ENCODE measurements at regions of chr6 and their contacts with region 1.

Region 1: DNA sequence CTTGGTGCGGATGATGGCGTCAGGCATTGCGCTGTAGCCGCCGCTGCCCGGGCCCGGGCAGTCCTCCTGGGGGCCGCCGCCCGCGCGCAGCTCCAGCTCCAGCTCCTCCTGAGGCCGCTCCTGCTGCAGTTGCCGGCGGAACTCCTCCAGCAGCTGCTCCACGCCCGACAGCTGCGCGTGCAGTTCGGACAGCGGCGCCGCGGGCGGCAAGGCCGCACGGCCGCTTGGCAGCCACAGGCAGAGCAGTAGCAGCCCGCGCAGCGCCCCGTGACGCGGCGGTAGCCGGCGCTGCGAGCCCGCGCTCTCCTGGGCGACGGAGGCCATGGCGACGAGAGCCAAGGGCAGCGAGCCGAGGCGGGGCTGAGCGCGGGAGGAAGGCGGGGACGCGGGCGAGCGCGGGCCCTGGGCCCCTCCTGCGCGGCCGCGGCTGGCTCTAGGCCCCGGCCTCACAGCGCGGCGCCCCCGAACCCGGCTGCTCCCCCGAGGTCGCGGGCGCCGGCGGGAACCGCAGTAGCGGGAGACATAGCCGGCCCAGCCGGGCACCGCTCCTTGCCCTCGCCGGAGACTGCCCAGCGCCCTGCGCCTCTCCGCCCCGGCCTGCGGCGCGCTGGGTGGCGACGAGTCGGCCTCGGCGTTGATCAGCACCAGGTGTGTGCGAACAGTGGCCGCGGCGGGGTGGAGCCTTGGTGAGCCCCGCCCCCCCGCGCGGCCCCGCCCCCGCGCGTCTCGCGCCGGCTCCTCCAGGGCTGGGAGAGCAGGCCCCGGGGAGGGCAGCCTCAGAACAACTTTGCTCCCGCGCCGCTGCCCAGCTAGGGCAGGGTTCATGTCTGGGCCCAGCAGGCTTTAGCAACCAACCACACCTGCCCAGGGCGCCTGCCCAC is at the start of gene LRP11:
- DNase-seq: peak; percentile 78
- H3K4me3 Mint-ChIP-seq: peak within 1 kb of the TSS; percentile 83
- H3K27ac Mint-ChIP-seq: no peak within 1 kb of the TSS
- H3K4me1 Mint-ChIP-seq: peaks cover 5% of the 10 kb centered on the region
- H3K27me3 Mint-ChIP-seq: peaks cover 32% of the 10 kb centered on the region
- total RNA-seq, gene LRP11: 3.6 and 4.3 TPM in 2 replicates

Region 2: DNA sequence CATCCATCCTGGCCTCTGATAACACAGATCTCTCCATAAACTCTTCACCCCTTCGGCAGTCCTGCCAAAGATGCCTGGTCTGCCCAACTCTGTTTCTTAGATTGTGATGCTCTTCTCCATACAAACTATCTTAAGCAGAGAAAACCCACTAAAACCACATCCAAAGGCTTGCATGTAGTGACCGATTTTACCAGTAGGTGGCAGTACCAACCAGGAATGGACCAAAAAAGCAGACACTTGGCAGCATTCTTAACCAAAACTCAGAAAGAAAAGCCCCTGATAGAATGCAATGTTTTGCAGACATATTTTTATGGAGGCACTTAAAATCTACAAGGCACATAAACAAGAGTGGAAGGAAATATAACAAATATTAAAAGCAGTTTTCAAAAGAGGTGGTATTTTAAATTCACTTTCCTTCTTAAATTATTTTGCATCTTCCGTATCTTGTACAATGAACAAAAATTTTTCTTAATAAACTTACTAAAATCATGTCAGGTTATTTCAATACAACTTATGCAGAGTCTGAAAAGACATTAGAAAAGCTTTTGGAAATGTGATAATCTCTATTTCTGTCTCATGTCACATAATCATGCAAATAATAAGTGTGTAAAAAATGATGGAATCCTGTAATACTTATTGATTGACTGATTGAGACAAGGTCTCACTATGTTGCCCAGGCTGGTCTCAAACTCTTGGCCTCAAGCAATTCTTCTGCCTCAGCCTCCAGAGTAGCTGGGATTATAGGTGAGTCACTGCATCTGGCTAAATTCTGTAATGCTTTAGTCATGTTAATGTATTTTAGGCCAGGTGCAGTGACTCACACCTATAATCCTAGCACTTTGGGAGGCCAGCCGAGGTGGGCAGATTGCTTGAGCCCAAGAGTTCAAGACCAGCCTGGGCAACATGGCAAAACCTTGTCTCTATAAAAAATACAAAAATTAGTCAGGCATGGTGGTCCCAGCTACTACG is 29.1 kb before region 1 on chr6:
- intact Hi-C with region 1: loop called (anchors 1 kb)
- DNase-seq: peak; percentile 62
- H3K4me3 Mint-ChIP-seq: no peak overlapping the region
- H3K27ac Mint-ChIP-seq: no peak overlapping the region
- H3K4me1 Mint-ChIP-seq: no peaks in the 10 kb centered on the region
- H3K27me3 Mint-ChIP-seq: peaks cover 8% of the 10 kb centered on the region

Region 3: DNA sequence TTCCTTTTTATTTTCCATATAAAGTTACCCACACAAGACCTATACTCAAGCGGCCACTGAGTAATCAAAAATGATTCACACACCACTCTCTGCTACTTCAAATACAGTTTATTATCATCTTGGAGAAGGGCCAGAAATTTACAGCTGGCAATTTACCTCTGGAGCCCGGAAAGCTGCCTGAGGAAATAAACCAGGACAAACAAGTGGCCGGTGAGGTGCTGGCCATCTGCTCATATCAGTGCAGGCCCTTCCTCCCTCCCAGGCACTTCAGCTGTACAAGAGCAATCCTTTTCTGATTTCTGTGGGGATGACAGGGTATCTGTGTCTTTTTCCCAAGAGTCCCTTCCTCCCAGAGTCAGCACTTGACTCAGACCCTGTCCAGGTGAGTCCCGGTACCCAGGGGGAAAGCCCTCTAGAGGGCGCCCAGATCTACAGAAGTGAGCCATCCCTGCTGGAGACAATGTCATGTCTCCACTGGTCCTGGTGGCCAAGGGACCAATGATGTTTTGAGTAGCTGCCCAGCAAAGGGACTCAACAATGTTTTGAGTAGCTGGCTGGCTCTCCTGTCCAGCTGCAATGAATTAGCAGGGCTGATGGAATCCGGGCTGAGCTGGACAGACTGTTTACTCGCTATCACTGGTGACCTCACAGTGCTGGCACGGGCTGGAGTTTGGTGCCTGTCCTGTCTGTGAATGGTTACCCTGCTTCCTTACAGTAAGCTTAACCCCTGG is 23.4 kb before region 1 on chr6:
- intact Hi-C with region 1: loop called (anchors 1 kb)
- DNase-seq: peak; percentile 30
- H3K4me3 Mint-ChIP-seq: no peak overlapping the region
- H3K27ac Mint-ChIP-seq: no peak overlapping the region
- H3K4me1 Mint-ChIP-seq: no peaks in the 10 kb centered on the region
- H3K27me3 Mint-ChIP-seq: peaks cover 20% of the 10 kb centered on the region

Measured in activated T-helper 2 cell treated with anti-CD3 and anti-CD28 coated beads, Interferon-gamma antibody, Interleukin-2, Interleukin-4, amounts not matched to agents 10 μg/mL and 5 μg/mL and 100 μg/mL, durations not matched to agents 14 hours and 24 hours and 36 hours (primary cell).